ENCODE measurements at regions of chr1 and their contacts with region 1.

Region 1: DNA sequence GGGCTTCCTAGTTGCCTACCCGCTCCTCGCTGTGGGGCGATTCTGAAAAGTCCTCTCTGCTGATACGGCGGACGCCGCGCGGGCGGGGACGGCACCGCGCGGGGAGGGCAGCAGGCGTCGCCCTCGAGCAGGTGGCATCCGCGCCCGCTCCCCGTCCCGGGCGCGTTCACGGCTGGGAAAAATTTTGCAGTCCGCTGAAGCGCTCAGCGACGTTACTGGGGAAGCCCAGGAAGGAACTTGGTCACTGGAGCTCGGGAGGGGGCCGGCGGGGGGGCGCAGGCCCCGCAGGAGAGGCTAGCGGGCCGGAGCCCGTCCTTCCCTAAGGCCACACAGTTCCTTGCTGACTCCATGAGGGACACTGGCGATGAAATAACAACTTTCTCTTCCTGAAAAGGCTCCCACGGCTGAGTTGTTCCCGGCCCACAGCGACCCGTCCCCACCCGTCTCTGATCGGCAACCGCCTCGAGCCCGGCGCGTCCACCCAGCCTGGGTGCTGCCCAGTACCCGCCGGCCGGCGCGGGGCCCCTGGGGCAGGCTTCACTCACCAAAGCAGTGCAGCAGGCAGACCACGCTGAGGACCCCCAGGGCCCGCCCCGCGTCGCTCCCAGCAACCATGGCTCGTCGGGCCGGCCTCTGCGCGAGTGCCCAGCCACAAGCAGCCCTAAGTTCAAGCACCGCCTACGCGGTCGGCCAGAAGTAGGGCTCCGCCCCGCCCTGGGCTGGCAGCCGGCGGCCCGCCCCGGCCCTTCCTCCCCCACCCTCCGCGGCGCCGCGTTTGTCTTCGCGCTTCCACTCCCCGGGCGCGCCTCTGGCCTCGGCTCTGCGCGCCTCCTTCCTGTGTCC is at the start of gene CD58:
- DNase-seq: peak; percentile 91
- H3K4me3 ChIP-seq: peak within 1 kb of the TSS; percentile 62
- H3K27ac ChIP-seq: peak within 1 kb of the TSS; percentile 67
- H3K4me1 ChIP-seq: peaks cover 3% of the 10 kb centered on the region
- H3K27me3 ChIP-seq: no peaks in the 10 kb centered on the region
- CTCF ChIP-seq: peak; percentile 69
- total RNA-seq, gene CD58: 8.2 and 9.1 TPM in 2 replicates

Region 2: DNA sequence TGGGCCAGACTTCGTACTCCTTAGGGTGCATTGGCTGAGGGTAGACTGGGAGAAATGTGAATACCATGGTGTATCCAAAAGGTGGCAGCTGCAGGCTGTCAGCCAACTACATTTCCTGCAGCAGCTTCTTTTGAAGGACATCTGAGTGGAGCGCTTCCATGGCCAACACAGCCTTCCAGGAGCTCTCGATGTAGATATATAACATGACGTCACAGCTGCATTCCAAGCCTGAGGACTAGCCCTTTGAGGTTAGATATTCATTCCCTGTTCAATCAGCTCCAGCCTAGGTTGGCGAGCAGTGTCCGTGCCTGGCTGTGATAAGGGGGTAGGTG is 351.6 kb before region 1 on chr1:
- CTCF ChIA-PET with region 1: no interaction called
- POLR2A ChIA-PET with region 1: no interaction called
- intact Hi-C with region 1: no loop called
- DNase-seq: peak; percentile 46
- H3K4me3 ChIP-seq: no peak overlapping the region
- H3K27ac ChIP-seq: no peak overlapping the region
- H3K4me1 ChIP-seq: peaks cover 7% of the 10 kb centered on the region
- H3K27me3 ChIP-seq: no peaks in the 10 kb centered on the region
- CTCF ChIP-seq: peak; percentile 40; the same call in 1 of the 2 replicates

Region 3: GRCh38 chr1:116724765-116725375 is 154.3 kb after region 1 on chr1:
- CTCF ChIA-PET with region 1: no interaction called
- POLR2A ChIA-PET with region 1: no interaction called
- intact Hi-C with region 1: loop called (anchors 5 kb)
- DNase-seq: peak; percentile 78
- H3K4me3 ChIP-seq: no peak overlapping the region
- H3K27ac ChIP-seq: no peak overlapping the region
- H3K4me1 ChIP-seq: peaks cover 18% of the 10 kb centered on the region
- H3K27me3 ChIP-seq: peaks cover 5% of the 10 kb centered on the region
- CTCF ChIP-seq: peak; percentile 94

Region 4: GRCh38 chr1:116817582-116818064 is 247.0 kb after region 1 on chr1:
- CTCF ChIA-PET with region 1: no interaction called
- POLR2A ChIA-PET with region 1: no interaction called
- intact Hi-C with region 1: loop called (anchors 5 kb)
- DNase-seq: peak; percentile 60
- H3K4me3 ChIP-seq: no peak overlapping the region
- H3K27ac ChIP-seq: no peak overlapping the region
- H3K4me1 ChIP-seq: no peaks in the 10 kb centered on the region
- H3K27me3 ChIP-seq: no peaks in the 10 kb centered on the region
- CTCF ChIP-seq: peak; percentile 74

Measured in A673 (cell line).